ENCODE measurements at regions of chr9 and their contacts with region 1.

Region 1: DNA sequence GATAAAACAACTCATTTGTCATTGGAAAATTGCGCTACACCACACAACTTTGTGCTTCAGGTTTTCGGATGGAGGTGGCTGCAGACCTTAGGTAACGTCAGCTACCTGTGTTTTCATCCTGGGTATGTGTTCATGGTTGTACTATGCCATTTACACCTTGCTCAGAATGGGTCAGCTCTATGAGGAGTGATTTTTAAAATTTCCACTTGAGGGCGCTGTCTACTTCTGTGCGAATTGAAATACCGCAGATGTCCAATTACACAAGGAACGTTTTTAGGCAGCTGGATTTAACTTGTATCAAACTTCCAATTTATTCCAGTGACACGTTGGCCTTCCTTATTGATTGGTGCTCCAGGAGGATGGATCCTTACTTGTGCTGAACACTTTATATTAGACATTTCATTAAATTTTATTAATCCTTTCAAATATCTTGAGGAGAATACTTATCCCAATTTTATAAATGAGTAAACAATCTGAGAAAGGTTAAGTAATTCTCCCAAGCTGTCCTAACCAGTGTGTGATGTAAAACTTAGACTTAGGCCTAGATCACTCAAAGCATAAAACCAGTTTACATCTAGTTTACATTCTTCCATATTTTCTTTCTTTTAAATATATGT is 23.4 kb downstream of the DMRTA1 start:
- DNase-seq: peak; percentile 8
- H3K4me3 ChIP-seq: no peak overlapping the region
- H3K27ac ChIP-seq: no peak overlapping the region
- H3K4me1 ChIP-seq: no peaks in the 10 kb centered on the region
- H3K27me3 ChIP-seq: no peaks in the 10 kb centered on the region
- CTCF ChIP-seq: peak; percentile 47 to 55 (median 48)
- EP300 ChIP-seq: no peak
- POLR2A ChIP-seq: no peak

Region 2: GRCh38 chr9:22037954-22038690 is 431.9 kb before region 1 on chr9:
- in situ Hi-C with region 1: loop called in 1 of 4 experiments (anchors 25 kb)
- intact Hi-C with region 1: no loop called
- DNase-seq: no peak
- H3K4me3 ChIP-seq: no peak overlapping the region
- H3K27ac ChIP-seq: peak overlapping the region; percentile 22 to 78 (median 65)
- H3K4me1 ChIP-seq: peaks cover 0 to 48% (median 29%) of the 10 kb centered on the region in 4 donors
- H3K27me3 ChIP-seq: no peaks in the 10 kb centered on the region
- CTCF ChIP-seq: peak; percentile 44 to 70 (median 52)
- EP300 ChIP-seq: no peak
- POLR2A ChIP-seq: no peak

Region 3: GRCh38 chr9:22986556-22986955 is 516.5 kb after region 1 on chr9:
- in situ Hi-C with region 1: no loop called
- intact Hi-C with region 1: no loop called
- DNase-seq: no peak
- H3K4me3 ChIP-seq: no peak overlapping the region
- H3K27ac ChIP-seq: no peak overlapping the region
- H3K4me1 ChIP-seq: no peaks in the 10 kb centered on the region
- H3K27me3 ChIP-seq: no peaks in the 10 kb centered on the region
- CTCF ChIP-seq: no peak
- EP300 ChIP-seq: no peak
- POLR2A ChIP-seq: no peak